Activated naive CD4-positive, alpha-beta T cell treated with anti-CD3 and anti-CD28 coated beads for 36 hours (primary cell): ENCODE measurements at regions of chr2 and their contacts with region 1.

Region 1: DNA sequence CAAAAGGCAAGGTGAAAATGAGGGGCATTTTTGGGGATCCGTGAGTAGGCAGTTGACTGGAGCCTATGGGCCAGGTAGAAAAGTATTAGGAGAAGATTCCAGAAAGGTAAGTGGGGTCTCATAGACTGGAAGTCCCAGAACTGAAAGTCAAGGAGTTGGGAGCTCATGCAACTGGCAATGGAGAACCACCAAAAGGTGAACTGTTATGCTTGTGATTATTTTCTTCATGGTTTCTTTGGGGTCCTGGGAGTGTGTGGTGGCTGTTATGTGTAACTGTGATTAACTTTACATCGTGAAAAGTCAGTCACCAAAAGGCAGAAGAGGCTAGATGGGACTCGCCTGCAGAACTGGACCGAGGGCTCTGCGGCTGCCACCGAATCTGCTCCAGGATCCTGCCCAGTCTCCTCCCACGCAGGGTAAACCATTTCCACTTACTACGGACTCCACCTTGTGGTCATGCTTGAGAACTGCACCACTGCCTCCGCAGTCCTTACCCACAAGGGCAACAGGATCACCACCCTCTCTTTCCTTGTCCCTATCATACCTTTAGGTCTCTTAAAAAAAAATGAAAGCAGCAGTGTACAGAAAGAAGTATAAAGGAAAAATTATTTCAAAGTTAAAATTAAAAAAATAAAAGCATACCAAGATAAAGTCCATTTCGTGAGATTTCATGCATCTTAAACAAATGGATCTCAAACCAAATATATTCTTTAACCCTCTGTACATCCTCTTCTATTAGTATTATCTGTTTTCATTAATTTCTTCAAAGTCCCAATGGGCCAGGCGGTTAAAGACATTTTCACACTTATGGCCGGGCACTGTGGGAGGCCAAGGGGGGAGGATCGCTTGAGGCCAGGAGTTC is 15.6 kb upstream of the CEP68 start:
- DNase-seq: peak; percentile 88
- H3K4me3 Mint-ChIP-seq: no peak overlapping the region
- H3K27ac Mint-ChIP-seq: no peak overlapping the region
- H3K4me1 Mint-ChIP-seq: peaks cover 7% of the 10 kb centered on the region
- H3K27me3 Mint-ChIP-seq: no peaks in the 10 kb centered on the region

Region 2: DNA sequence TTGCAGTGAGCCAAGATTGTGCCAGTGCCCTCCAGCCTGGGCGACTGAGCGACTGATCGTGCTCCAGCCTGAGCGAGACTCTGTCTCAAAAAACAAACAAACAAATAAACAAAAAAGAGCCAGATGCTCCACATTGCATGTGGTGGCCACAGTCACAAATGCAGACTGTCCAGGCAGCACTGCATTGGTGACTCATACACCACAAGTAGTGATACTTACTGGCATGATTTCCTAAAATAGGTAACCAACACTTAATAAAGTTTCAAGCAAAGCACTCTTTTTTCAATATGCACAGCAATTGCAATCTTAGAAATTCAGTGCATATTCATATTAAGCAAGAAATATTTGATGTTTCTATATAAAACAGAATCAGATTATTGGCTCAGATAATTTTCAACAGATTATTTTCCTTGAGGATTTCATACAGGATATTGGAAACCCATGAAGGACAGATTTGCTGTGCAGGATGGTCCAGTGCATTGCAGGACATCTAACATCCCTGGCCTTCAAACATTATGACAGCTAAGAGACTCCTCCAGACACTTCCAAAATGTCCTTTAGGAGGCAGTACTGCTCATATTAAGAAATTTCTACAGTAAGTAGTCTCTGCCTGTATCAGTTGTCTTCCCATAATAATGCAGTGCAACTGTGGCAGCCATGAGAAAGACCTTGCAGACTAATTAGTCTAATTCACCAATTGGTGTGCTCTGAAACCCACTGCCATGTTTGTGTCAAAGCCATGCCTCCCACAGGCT is 61.9 kb before region 1 on chr2:
- CTCF ChIA-PET with region 1: interaction called, 3 read pairs
- intact Hi-C with region 1: loop called (anchors 1 kb)
- DNase-seq: no peak
- H3K4me3 Mint-ChIP-seq: no peak overlapping the region
- H3K27ac Mint-ChIP-seq: no peak overlapping the region
- H3K4me1 Mint-ChIP-seq: peaks cover 13% of the 10 kb centered on the region
- H3K27me3 Mint-ChIP-seq: no peaks in the 10 kb centered on the region